Sigmoid colon (tissue), 7 donors: ENCODE measurements at regions of chr7 and their contacts with region 1.

Region 1: GRCh38 chr7:108094933-108095710 is 35.0 kb downstream of the LAMB4 start:
- DNase-seq: peak; percentile 88
- H3K4me3 ChIP-seq: no peak overlapping the region
- H3K27ac ChIP-seq: peak overlapping the region; percentile 42 to 84 (median 70)
- H3K4me1 ChIP-seq: peaks cover 0 to 29% (median 23%) of the 10 kb centered on the region in 4 donors
- H3K27me3 ChIP-seq: no peaks in the 10 kb centered on the region
- CTCF ChIP-seq: no peak
- EP300 ChIP-seq: peak in 2 of 4 donors; percentile 57 to 89
- POLR2A ChIP-seq: no peak

Region 2: GRCh38 chr7:107914831-107915230 is 180.3 kb before region 1 on chr7:
- intact Hi-C with region 1: no loop called
- DNase-seq: no peak
- H3K4me3 ChIP-seq: no peak overlapping the region
- H3K27ac ChIP-seq: no peak overlapping the region
- H3K4me1 ChIP-seq: peaks cover 0 to 16% (median 7%) of the 10 kb centered on the region in 4 donors
- H3K27me3 ChIP-seq: no peaks in the 10 kb centered on the region
- CTCF ChIP-seq: no peak
- EP300 ChIP-seq: no peak
- POLR2A ChIP-seq: no peak

Region 3: DNA sequence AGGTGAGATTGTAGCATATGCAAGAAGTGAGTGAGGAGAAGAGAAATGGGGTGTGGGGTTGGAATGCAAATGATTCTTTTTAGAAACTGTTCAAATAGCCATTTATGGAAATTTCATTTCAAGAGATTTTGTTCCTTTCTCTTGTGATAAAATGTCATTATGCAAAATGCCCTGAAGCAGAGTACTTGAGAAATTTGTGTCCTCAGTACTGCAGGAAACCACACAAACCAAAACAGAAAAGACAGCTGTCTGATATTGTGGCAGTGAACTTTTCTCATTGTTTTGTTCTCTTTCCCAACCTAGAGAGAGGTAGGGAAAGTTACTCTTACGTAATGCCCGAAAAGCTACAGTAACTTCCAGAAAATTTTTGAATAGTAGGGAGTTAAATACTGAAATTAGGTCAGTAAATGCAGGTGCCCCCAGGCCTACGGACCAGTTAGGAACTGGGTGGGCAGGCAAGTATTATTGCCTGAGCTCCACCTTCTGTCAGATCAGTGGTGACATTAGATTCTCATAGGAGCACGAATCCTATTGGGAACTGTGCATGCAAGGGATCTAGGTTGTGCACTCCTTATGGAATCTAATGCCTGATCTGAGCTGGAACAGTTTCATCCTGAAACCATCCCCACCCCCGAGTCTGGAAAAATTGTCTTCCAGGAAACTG is 170.1 kb before region 1 on chr7:
- intact Hi-C with region 1: no loop called
- DNase-seq: no peak
- H3K4me3 ChIP-seq: no peak overlapping the region
- H3K27ac ChIP-seq: peak overlapping the region; percentile 16 to 72 (median 50)
- H3K4me1 ChIP-seq: peaks cover 0 to 53% (median 32%) of the 10 kb centered on the region in 4 donors
- H3K27me3 ChIP-seq: no peaks in the 10 kb centered on the region
- CTCF ChIP-seq: no peak
- EP300 ChIP-seq: no peak
- POLR2A ChIP-seq: no peak

Region 4: GRCh38 chr7:108016841-108017775 is 78.0 kb before region 1 on chr7:
- intact Hi-C with region 1: loop called (anchors 5 kb)
- DNase-seq: no peak
- H3K4me3 ChIP-seq: no peak overlapping the region
- H3K27ac ChIP-seq: peak overlapping the region; percentile 7 to 68 (median 39)
- H3K4me1 ChIP-seq: peaks cover 0 to 51% (median 31%) of the 10 kb centered on the region in 4 donors
- H3K27me3 ChIP-seq: no peaks in the 10 kb centered on the region
- CTCF ChIP-seq: peak in 3 of 4 experiments; percentile 35 to 45 (median 37)
- EP300 ChIP-seq: no peak
- POLR2A ChIP-seq: no peak

Region 5: DNA sequence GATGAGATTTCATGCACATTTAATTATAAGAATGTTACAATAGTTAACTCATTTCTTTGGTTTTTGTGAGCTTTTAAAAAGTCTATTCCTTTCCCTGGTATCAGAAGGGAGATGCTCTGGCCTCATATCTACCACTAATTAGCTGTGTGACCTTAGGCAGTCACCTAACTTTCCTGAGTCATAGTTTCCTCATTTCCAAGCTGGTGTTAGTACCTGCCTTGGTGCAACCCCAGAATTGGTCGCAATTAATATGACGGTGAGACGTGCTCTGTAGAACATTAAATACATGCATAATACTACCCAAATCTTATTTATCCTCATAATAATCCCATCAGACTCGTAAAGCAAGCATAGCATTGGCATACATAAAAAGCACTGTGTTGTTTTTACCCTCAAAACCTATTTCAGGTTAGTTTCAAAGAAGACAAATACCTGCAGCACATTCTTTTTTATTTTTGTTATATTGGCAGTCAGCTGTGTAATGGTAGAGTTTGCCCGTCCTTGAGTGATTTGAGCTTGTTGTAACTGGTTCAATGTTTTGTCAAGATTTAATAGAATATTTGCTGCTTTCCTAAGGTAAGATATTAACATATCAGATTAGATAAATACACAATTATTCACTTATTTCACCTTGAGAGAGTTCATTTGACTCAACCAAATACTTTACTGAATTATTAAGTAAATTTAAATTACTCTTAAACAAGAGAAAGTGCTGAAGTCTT is 61.2 kb before region 1 on chr7:
- intact Hi-C with region 1: loop called (anchors 2 kb)
- DNase-seq: no peak
- H3K4me3 ChIP-seq: no peak overlapping the region
- H3K27ac ChIP-seq: no peak overlapping the region
- H3K4me1 ChIP-seq: no peaks in the 10 kb centered on the region
- H3K27me3 ChIP-seq: no peaks in the 10 kb centered on the region
- CTCF ChIP-seq: no peak
- EP300 ChIP-seq: no peak
- POLR2A ChIP-seq: no peak

Region 6: DNA sequence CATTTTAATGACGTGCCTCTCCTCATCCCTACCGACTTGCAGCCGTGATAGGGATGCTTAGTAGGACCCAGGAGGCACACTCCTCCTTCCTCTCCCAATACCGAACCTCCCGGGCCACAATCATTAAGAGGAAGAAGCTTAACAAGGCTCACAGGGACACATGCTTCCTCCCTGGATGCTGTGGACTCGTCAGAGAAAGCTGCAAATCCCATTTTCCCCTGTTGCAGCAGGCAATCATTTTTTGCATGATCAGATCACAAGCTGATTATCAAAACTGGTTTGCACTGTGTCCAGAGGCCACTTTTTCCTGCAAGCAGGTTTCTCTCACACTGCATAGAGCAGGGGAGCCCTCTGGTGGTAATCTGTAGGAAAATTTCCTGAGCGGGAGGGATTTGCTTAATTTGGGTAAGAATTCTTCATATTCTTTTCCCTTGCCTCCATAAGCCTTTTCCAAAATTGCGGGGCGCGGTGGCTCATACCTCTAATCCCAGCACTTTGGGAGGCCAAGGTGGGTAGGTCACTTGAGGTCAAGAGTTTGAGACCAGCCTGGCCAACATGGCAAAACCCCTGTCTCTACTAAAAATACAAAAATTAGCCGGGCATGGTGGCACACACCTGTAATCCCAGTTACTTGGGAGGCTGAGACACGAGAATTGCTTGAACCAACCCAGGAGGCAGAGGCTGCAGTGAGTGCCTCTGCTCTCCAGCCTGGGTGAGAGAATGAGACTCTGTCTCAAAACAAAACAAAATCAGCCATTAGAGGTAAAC is 51.1 kb after region 1 on chr7:
- intact Hi-C with region 1: loop called (anchors 5 kb)
- DNase-seq: peak; percentile 78
- H3K4me3 ChIP-seq: peak overlapping the region in 3 of 4 donors; percentile 13 to 31 (median 28)
- H3K27ac ChIP-seq: peak overlapping the region in 2 of 4 donors; percentile 16 to 41
- H3K4me1 ChIP-seq: peaks cover 0 to 26% (median 16%) of the 10 kb centered on the region in 4 donors
- H3K27me3 ChIP-seq: no peaks in the 10 kb centered on the region
- CTCF ChIP-seq: peak; percentile 80 to 93 (median 88)
- EP300 ChIP-seq: no peak
- POLR2A ChIP-seq: no peak